BJ (cell line): ENCODE measurements at regions of chr5 and their contacts with region 1.

Region 1: GRCh38 chr5:77491783-77492652 is at the start of gene WDR41:
- DNase-seq: peak; percentile 93
- H3K4me3 ChIP-seq: peak within 1 kb of the TSS; percentile 86
- H3K27me3 ChIP-seq: no peaks in the 10 kb centered on the region; the same call in 1 of the 2 replicates
- CTCF ChIP-seq: peak; percentile 85
- polyA plus RNA-seq, gene WDR41: 112 and 164 TPM in 2 replicates

Region 2: DNA sequence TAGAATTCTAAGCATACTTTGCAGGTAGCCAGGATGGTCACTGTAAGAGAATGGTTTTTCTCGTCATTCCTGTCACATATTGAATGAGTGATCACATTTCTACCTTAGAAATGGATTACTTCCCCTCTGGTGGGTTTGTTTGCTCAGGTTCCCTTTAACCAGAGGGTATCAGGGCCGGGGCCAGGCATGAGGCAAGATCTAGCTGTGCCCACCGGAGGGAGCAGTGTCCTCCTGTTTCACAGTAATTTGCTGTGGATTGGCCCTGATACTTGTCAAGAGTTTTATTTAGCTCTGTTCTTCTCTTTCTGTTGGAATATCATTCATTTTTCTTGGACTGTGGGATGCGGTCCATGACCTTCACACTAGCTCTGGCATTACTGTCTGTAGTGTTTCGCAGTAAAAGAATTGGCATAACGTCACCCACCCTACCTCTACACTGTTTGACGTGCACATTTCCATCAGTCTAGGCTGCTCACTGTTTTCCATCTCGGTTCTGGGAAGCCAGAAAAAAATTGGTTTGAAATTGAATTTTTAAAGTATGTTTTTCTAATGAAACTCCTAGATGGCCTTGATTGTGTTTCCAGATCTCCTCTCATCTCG is 362.5 kb before region 1 on chr5:
- CTCF ChIA-PET with region 1: interaction called, 20 read pairs
- POLR2A ChIA-PET with region 1: interaction called, 6 read pairs
- DNase-seq: no peak
- H3K4me3 ChIP-seq: no peak overlapping the region
- H3K27me3 ChIP-seq: peaks cover 18% of the 10 kb centered on the region
- CTCF ChIP-seq: peak; percentile 66

Region 3: DNA sequence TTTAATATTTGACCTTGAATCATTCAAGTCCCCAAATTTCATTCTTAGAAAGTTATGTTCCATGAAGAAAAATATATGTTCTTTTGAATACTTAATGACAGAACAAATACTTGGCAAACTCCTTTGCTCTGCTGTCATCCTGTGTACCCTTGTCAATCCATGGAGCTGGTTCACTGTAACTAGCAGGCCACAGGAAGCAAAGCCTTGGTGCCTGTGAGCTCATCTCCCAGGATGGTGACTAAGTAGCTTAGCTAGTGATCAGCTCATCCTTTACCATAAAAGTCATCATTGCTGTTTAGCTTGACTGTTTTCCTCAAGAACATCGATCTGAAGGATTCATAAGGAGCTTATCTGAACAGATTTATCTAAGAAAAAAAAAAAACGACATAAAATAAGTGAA is 65.3 kb before region 1 on chr5:
- CTCF ChIA-PET with region 1: interaction called, 17 read pairs
- POLR2A ChIA-PET with region 1: interaction called, 3 read pairs
- DNase-seq: no peak
- H3K4me3 ChIP-seq: no peak overlapping the region
- H3K27me3 ChIP-seq: no peaks in the 10 kb centered on the region
- CTCF ChIP-seq: no peak

Region 4: GRCh38 chr5:78328585-78329173 is 836.7 kb after region 1 on chr5:
- CTCF ChIA-PET with region 1: no interaction called
- POLR2A ChIA-PET with region 1: no interaction called
- DNase-seq: peak; percentile 22
- H3K4me3 ChIP-seq: no peak overlapping the region
- H3K27me3 ChIP-seq: 0 out of 2 replicates have a peak, but pooled peaks cover 1% of the 10 kb centered on the region
- CTCF ChIP-seq: no peak